ENCODE measurements at regions of chr11 and their contacts with region 1.

Region 1: GRCh38 chr11:123924027-123924426 is 15.4 kb upstream of the OR4D5 start:
- DNase-seq: no peak
- ATAC-seq: no peak
- H3K4me3 ChIP-seq: no peak overlapping the region
- H3K27ac ChIP-seq: no peak overlapping the region
- H3K4me1 ChIP-seq: no peaks in the 10 kb centered on the region
- H3K27me3 ChIP-seq: no peaks in the 10 kb centered on the region
- CTCF ChIP-seq: no peak

Region 2: GRCh38 chr11:123707606-123708205 is 216.3 kb before region 1 on chr11:
- intact Hi-C with region 1: no loop called
- DNase-seq: peak in 1 of 2 donors; percentile 52
- ATAC-seq: peak in 5 of 8 donors; percentile 47 to 76 (median 65)
- H3K4me3 ChIP-seq: no peak overlapping the region
- H3K27ac ChIP-seq: no peak overlapping the region
- H3K4me1 ChIP-seq: peaks cover 0 to under 1% (median 0%) of the 10 kb centered on the region in 9 donors
- H3K27me3 ChIP-seq: peaks cover 0 to 7% (median 0%) of the 10 kb centered on the region in 7 donors
- CTCF ChIP-seq: peak; percentile 41 to 86 (median 74)

Region 3: GRCh38 chr11:123859731-123860130 is 64.3 kb before region 1 on chr11:
- intact Hi-C with region 1: loop called in 1 of 10 experiments (anchors 10 kb)
- DNase-seq: no peak
- ATAC-seq: no peak
- H3K4me3 ChIP-seq: no peak overlapping the region
- H3K27ac ChIP-seq: no peak overlapping the region
- H3K4me1 ChIP-seq: no peaks in the 10 kb centered on the region
- H3K27me3 ChIP-seq: no peaks in the 10 kb centered on the region
- CTCF ChIP-seq: no peak